ENCODE measurements at regions of chr10 and their contacts with region 1.

Region 1: DNA sequence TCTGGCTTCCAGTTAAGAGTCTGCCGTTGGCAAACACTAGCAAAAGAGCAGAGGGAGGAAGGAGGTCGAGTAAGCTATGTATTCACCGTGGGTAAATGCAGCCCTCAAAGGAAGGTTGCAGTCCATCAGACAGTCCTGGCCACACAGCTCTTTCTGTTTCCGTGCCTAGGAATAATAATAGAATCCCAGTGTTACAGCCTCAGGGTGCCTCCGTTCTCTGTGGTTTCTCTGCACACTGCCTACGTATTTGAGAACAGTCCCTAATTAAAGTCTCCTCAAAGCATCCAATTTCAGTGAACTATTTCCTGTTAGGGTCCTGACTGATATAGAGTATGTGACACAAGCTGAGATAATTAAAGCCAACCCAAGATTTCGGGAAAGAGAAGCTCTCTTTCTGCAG is 176.7 kb downstream of the GPAM start:
- DNase-seq: no peak
- H3K4me3 ChIP-seq: no peak overlapping the region
- H3K27ac ChIP-seq: no peak overlapping the region
- H3K4me1 ChIP-seq: no peaks in the 10 kb centered on the region
- CTCF ChIP-seq: no peak

Region 2: DNA sequence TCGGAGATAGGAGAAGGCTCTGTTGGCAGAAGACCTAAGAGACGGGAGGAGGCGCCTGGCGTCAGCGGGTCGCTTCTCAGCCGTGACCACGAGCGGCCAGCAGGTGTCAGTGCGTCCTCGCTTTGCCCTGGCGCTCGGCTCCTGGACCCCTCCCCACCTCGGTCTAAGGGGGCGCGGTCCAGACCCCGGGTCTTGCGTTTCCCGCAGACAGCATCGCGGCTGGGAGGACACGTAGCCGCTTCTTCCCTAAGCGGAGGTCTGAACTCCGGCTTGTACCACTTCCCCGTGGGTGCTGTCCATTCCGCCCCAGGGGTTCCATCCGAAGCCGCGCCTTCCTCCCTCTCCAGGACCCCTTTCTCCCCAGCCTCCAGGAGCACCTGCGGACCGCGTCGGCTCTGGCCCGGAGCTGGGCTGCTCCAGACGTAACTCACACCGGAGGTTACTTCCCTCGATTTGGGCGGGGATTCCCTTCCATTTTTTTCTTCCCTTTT is 930.6 kb before region 1 on chr10:
- CTCF ChIA-PET with region 1: no interaction called
- POLR2A ChIA-PET with region 1: interaction called, 12 read pairs
- intact Hi-C with region 1: no loop called
- DNase-seq: peak; percentile 14
- H3K4me3 ChIP-seq: no peak overlapping the region
- H3K27ac ChIP-seq: no peak overlapping the region
- H3K4me1 ChIP-seq: no peaks in the 10 kb centered on the region
- CTCF ChIP-seq: peak; percentile 62

Region 3: GRCh38 chr10:111890046-111890445 is 116.8 kb before region 1 on chr10:
- CTCF ChIA-PET with region 1: no interaction called
- POLR2A ChIA-PET with region 1: no interaction called
- intact Hi-C with region 1: no loop called
- DNase-seq: no peak
- H3K4me3 ChIP-seq: no peak overlapping the region
- H3K27ac ChIP-seq: no peak overlapping the region
- H3K4me1 ChIP-seq: no peaks in the 10 kb centered on the region
- CTCF ChIP-seq: no peak

Region 4: DNA sequence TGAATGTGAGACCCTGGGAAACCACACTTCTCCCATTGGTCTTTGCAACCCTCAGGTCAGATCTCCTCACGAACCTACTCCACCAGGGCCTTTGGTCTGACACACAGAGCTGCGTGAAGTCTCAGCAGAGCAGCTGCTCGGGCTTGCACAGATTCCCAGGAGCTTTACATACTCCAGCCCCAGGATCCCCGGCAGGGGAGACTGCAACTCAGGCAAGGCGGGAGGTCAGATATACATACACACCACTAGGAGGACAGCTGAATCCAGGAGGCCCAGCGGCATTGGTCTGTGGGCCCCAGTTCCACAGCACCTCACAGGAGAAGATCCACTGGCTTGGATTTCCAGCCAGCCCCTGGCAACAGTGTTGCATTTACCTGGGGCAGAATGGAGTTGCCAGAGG is 62.5 kb before region 1 on chr10:
- CTCF ChIA-PET with region 1: no interaction called
- POLR2A ChIA-PET with region 1: no interaction called
- intact Hi-C with region 1: no loop called
- DNase-seq: no peak
- H3K4me3 ChIP-seq: no peak overlapping the region
- H3K27ac ChIP-seq: no peak overlapping the region
- H3K4me1 ChIP-seq: no peaks in the 10 kb centered on the region
- CTCF ChIP-seq: no peak

Region 5: DNA sequence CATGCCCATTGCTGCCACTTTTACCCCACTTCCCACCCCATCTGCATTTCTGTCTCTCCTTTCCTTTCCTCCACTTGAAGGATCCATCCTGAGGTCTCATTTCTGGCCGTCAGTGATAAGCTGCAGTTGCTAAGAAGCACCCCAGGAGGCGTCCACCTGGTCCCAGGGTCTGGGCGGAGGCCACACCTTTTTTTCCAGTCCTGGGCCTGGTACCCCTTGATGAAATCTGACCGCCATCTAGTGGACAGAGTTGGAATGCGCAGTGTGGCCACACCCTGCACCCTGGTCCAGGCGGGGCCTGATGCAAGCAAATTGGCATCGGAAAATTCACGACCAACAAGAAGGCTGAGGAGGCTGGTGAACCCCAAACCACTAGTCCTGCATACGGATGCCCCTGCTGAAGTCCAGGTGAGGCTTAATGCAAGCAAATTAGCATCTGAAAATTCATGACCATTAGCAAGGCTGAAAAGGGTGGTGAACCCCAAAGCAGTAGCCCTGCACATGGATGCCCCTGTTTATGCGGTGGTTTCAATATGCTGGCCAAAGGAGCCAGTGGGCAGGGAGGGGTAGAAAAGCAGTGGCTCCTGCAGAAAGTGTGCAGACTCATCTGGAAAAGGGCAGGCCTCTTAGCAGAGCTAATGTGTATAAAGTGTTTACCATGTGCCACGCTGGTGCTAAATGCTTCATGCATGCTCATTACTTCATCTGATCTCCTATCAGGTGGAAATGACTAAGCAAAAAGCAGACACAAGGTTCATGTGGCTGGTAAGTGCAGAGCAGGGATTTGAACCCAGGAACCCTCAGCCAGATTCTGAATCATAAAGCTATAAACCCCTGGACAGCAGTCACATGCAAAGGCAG is 133.5 kb after region 1 on chr10:
- CTCF ChIA-PET with region 1: no interaction called
- POLR2A ChIA-PET with region 1: no interaction called
- intact Hi-C with region 1: no loop called
- DNase-seq: peak; percentile 80
- H3K4me3 ChIP-seq: no peak overlapping the region
- H3K27ac ChIP-seq: no peak overlapping the region
- H3K4me1 ChIP-seq: no peaks in the 10 kb centered on the region
- CTCF ChIP-seq: peak; percentile 88